B cell (primary cell): ENCODE measurements at regions of chr19 and their contacts with region 1.

Region 1: GRCh38 chr19:54159352-54160181 is at the start of gene LENG1:
- DNase-seq: peak; percentile 100
- ATAC-seq: peak; percentile 87
- H3K4me3 ChIP-seq: peak within 1 kb of the TSS; percentile 67 to 95 (median 79)
- H3K4me3 Mint-ChIP-seq: peak within 1 kb of the TSS; percentile 100
- H3K27ac ChIP-seq: peak within 1 kb of the TSS; percentile 75 to 82
- H3K27ac Mint-ChIP-seq: peak within 1 kb of the TSS; percentile 100
- H3K4me1 ChIP-seq: peaks cover 35 to 48% of the 10 kb centered on the region in 2 donors
- H3K4me1 Mint-ChIP-seq: peaks cover 45% of the 10 kb centered on the region
- H3K27me3 ChIP-seq: peaks cover 0 to 6% (median 3%) of the 10 kb centered on the region in 4 experiments
- H3K27me3 Mint-ChIP-seq: peaks cover 8% of the 10 kb centered on the region
- CTCF ChIP-seq: peak; percentile 26
- total RNA-seq, gene LENG1: 13.7 and 16.5 TPM in 2 replicates

Region 2: DNA sequence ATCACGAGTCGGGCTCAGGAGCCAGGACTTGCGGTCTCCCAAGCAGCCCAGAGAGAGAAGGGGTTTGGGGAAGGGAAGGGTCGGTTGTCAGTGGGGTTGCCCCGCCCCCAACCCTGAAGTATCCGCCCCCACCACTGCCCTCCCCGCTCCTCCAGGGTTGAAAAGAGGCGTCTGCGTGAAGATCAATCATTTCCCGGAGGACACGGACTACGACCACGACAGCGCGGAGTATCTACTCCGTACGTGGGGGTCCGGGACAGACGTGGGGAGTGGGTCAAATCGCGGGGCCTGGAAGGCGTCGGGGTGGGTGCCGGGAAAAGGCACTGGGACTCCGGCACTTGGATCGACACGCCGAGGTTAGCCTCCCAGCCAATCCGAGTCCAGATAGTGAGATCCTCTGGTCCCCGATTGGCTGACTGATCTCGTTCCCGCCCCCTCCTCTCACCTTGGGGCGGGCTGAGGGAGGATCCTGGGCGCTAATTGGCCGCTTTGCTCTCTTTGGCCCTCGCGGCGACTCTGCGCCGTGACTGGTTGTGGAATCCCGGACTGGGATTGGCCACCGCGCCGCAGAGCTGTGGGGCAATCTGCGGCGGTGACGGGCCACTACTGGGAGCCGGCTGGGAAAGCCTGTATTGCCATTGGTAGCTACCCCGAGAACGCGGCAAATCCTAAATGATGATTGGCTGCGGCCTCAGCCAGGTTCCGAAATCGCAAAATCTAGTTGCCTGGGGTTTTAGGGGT is 181.4 kb before region 1 on chr19:
- CTCF ChIA-PET with region 1: no interaction called
- POLR2A ChIA-PET with region 1: no interaction called
- intact Hi-C with region 1: no loop called
- DNase-seq: no peak
- ATAC-seq: no peak
- H3K4me3 ChIP-seq: peak overlapping the region in 4 of 5 experiments; percentile 46 to 67 (median 52)
- H3K4me3 Mint-ChIP-seq: peak overlapping the region; percentile 86
- H3K27ac ChIP-seq: no peak overlapping the region
- H3K27ac Mint-ChIP-seq: peak overlapping the region; percentile 11
- H3K4me1 ChIP-seq: peaks cover 21 to 28% of the 10 kb centered on the region in 2 donors
- H3K4me1 Mint-ChIP-seq: peaks cover 19% of the 10 kb centered on the region
- H3K27me3 ChIP-seq: peaks cover 0 to 60% (median 30%) of the 10 kb centered on the region in 4 experiments
- H3K27me3 Mint-ChIP-seq: peaks cover 50% of the 10 kb centered on the region
- CTCF ChIP-seq: no peak

Region 3: DNA sequence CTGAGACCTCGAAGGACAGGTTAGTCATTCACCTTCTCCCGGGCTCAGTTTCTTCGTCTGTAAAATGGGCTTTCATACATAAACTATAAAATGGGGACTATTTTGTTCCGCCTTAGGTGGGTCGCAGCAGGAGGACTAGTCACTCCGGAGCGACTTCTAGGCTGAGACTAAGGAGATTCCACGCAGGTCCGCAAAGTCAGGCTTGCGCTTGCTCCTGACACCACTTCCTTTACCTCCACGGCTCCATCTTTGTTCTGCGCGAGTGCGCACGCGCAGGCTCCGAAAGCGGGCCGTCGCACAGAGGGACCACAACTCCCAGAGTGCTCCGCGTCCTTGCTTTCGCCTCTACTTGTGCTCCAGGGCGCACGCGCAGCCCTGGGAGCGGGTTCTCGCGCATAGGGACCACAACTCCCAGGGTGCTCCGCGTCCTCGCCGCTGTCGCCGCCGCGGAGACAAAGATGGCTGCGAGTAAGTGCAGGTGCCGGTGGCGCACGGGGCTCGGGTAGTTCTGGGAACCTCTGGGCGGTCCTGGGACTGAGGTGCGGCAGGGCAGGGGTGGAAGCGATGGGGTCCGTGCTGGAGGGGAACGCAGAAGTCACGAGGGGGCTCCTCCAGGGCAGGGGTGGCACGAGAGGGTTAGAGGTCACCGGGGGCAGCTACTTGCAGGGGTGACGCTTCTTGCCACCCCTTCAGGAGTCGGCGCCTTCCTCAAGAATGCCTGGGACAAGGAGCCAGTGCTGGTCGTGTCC is 57.0 kb before region 1 on chr19 and contains the start of gene NDUFA3:
- CTCF ChIA-PET with region 1: no interaction called
- POLR2A ChIA-PET with region 1: no interaction called
- intact Hi-C with region 1: loop called (anchors 1 kb)
- DNase-seq: peak; percentile 99
- ATAC-seq: peak; percentile 99
- H3K4me3 ChIP-seq: peak within 1 kb of the TSS; percentile 59 to 90 (median 76)
- H3K4me3 Mint-ChIP-seq: peak within 1 kb of the TSS; percentile 100
- H3K27ac ChIP-seq: peak within 1 kb of the TSS; percentile 59 to 74
- H3K27ac Mint-ChIP-seq: peak within 1 kb of the TSS; percentile 89
- H3K4me1 ChIP-seq: peaks cover 6 to 13% of the 10 kb centered on the region in 2 donors
- H3K4me1 Mint-ChIP-seq: peaks cover 20% of the 10 kb centered on the region
- H3K27me3 ChIP-seq: no peaks in the 10 kb centered on the region
- H3K27me3 Mint-ChIP-seq: no peaks in the 10 kb centered on the region
- CTCF ChIP-seq: no peak
- total RNA-seq, gene NDUFA3: 91.8 and 94.4 TPM in 2 replicates

Region 4: GRCh38 chr19:54115109-54116063 is 44.2 kb before region 1 on chr19 and contains the starts of genes PRPF31 and TFPT:
- CTCF ChIA-PET with region 1: interaction called, 3 read pairs
- POLR2A ChIA-PET with region 1: interaction called, 6 read pairs
- intact Hi-C with region 1: loop called (anchors 1 kb)
- DNase-seq: peak; percentile 99
- ATAC-seq: peak; percentile 93
- H3K4me3 ChIP-seq: peak within 1 kb of the TSS; percentile 71 to 86 (median 81)
- H3K4me3 Mint-ChIP-seq: peak within 1 kb of the TSS; percentile 89
- H3K27ac ChIP-seq: peak within 1 kb of the TSS; percentile 76 to 78
- H3K27ac Mint-ChIP-seq: peak within 1 kb of the TSS; percentile 87
- H3K4me1 ChIP-seq: peaks cover 14 to 25% of the 10 kb centered on the region in 2 donors
- H3K4me1 Mint-ChIP-seq: peaks cover 31% of the 10 kb centered on the region
- H3K27me3 ChIP-seq: no peaks in the 10 kb centered on the region
- H3K27me3 Mint-ChIP-seq: no peaks in the 10 kb centered on the region
- CTCF ChIP-seq: no peak
- total RNA-seq, gene PRPF31: 65.4 and 66.2 TPM in 2 replicates
- total RNA-seq, gene TFPT: 10.4 and 12.7 TPM in 2 replicates

Region 5: GRCh38 chr19:54203151-54203611 is 43.6 kb after region 1 on chr19:
- CTCF ChIA-PET with region 1: interaction called, 3 read pairs
- POLR2A ChIA-PET with region 1: interaction called, 11 read pairs
- intact Hi-C with region 1: loop called (anchors 1 kb)
- DNase-seq: peak; percentile 23
- ATAC-seq: no peak
- H3K4me3 ChIP-seq: no peak overlapping the region
- H3K4me3 Mint-ChIP-seq: peak overlapping the region; percentile 96
- H3K27ac ChIP-seq: no peak overlapping the region
- H3K27ac Mint-ChIP-seq: peak overlapping the region; percentile 46
- H3K4me1 ChIP-seq: peaks cover 46 to 66% of the 10 kb centered on the region in 2 donors
- H3K4me1 Mint-ChIP-seq: peaks cover 71% of the 10 kb centered on the region
- H3K27me3 ChIP-seq: no peaks in the 10 kb centered on the region
- H3K27me3 Mint-ChIP-seq: no peaks in the 10 kb centered on the region
- CTCF ChIP-seq: no peak

Region 6: DNA sequence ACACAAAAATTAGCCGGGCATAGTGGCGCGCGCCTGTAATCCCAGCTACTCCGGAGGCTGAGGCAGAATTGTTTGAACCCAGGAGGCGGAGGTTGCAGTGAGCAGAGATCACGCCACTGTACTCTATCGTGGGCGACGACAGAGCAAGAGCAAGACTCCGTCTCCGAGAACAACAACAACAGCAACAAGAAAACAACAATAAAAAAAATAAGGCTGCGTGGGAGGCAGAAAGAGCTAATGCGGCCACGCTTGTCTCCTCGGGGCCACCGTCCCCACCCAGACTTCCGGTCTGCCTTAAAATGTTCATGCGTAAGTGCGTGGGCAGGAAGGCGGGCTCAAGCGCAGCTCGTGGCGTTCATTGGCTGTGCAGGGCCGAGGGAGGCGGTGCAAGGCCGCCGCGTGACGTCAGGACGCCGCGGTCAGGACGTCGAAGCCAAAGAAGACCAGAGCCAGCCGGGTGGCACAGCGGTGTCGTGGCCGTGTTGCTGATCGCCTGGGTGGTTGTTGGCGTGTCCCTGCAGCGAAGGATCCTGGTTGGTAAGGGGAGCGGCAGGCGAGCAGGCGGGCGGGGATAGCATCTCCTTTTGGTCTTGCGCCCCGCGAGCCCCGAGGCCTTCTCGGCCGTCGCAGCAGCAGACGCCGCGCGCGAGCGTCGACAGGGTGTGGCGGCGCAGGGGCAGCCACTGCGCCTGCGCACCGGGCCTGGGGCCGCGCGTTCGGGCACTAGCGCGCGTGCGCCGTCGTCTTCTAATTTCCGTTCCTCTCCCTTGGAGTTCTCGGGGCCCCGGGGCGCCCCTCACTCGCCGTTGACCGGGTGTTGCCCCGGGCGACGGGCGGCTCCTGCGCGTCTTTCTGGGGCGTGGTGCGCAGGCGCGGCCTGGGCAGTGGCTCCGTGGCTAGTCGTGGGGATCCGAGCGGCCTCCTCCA is 289.5 kb after region 1 on chr19 and contains the start of gene LENG8:
- CTCF ChIA-PET with region 1: no interaction called
- POLR2A ChIA-PET with region 1: no interaction called
- intact Hi-C with region 1: loop called (anchors 2 kb)
- DNase-seq: peak; percentile 100
- ATAC-seq: peak; percentile 93
- H3K4me3 ChIP-seq: peak within 1 kb of the TSS; percentile 71 to 91 (median 88)
- H3K4me3 Mint-ChIP-seq: peak within 1 kb of the TSS; percentile 95
- H3K27ac ChIP-seq: peak within 1 kb of the TSS; percentile 93 to 98
- H3K27ac Mint-ChIP-seq: peak within 1 kb of the TSS; percentile 100
- H3K4me1 ChIP-seq: peaks cover 31 to 33% of the 10 kb centered on the region in 2 donors
- H3K4me1 Mint-ChIP-seq: peaks cover 48% of the 10 kb centered on the region
- H3K27me3 ChIP-seq: no peaks in the 10 kb centered on the region
- H3K27me3 Mint-ChIP-seq: no peaks in the 10 kb centered on the region
- CTCF ChIP-seq: no peak
- total RNA-seq, gene LENG8: 668 and 687 TPM in 2 replicates

Region 7: GRCh38 chr19:55044673-55045443 is 885.3 kb after region 1 on chr19:
- CTCF ChIA-PET with region 1: no interaction called
- POLR2A ChIA-PET with region 1: no interaction called
- intact Hi-C with region 1: no loop called
- DNase-seq: no peak
- ATAC-seq: no peak
- H3K4me3 ChIP-seq: no peak overlapping the region
- H3K4me3 Mint-ChIP-seq: no peak overlapping the region
- H3K27ac ChIP-seq: no peak overlapping the region
- H3K27ac Mint-ChIP-seq: no peak overlapping the region
- H3K4me1 ChIP-seq: peaks cover 6 to 8% of the 10 kb centered on the region in 2 donors
- H3K4me1 Mint-ChIP-seq: peaks cover 8% of the 10 kb centered on the region
- H3K27me3 ChIP-seq: no peaks in the 10 kb centered on the region
- H3K27me3 Mint-ChIP-seq: no peaks in the 10 kb centered on the region
- CTCF ChIP-seq: no peak